ENCODE measurements at regions of chr7 and their contacts with region 1.

Region 1: DNA sequence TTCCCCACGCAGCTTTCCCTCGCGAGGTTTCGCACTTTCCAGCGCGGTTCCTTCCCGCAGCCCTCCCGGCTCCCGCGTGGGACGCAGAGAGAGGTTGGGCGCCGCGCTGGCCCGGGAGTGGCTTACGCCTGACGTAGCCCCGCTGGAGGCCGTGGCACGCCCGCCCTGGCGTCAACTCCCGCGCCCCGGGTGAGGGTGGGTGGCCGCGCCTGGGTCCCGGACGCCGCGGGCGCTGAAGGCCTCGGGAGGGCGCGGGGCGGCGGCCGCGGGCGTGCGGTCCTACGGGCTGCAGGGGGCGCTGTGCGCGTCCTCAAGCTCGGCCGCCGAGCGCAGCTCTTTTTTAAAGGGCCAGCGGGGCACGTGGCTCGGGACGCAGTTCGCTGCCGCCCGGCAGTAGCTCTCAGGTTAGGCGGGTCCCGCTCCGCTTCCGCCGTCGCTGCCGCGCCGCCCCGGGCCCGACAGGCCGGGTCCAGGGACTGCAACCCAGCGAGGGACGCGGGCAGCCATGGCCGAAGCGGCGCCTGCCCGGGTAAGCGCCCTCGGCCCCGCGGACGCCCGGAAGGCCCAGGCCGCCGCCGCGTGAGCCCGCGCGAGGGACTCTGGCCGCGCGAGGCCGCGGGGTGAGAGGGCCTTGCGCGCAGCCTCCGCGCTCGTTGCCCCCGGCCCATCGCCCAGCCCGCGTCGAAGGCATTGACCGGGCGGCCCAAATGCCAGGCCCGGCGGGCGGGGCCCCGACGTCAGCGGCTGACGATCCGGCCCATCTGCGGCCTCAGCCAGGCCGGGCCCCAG is at the start of gene ZNF783:
- DNase-seq: peak; percentile 93 to 96 (median 95)
- H3K4me3 ChIP-seq: peak within 1 kb of the TSS; percentile 31 to 80 (median 57)
- H3K27ac ChIP-seq: peak within 1 kb of the TSS in 1 of 2 experiments; percentile 64
- H3K4me1 ChIP-seq: peaks cover 0 to 16% (median 13%) of the 10 kb centered on the region in 4 experiments
- H3K27me3 ChIP-seq: no peaks in the 10 kb centered on the region

Region 2: GRCh38 chr7:149239345-149240191 is 22.5 kb before region 1 on chr7 and contains the start of gene ZNF212:
- CTCF ChIA-PET with region 1: interaction called, 10 read pairs
- POLR2A ChIA-PET with region 1: interaction called, 3 read pairs
- DNase-seq: peak; percentile 90 to 93 (median 92)
- H3K4me3 ChIP-seq: peak within 1 kb of the TSS; percentile 91 to 98 (median 97)
- H3K27ac ChIP-seq: peak within 1 kb of the TSS; percentile 74 to 91
- H3K4me1 ChIP-seq: peaks cover 6 to 11% (median 11%) of the 10 kb centered on the region in 4 experiments
- H3K27me3 ChIP-seq: peaks cover 0 to 4% (median 1%) of the 10 kb centered on the region in 5 experiments

Region 3: DNA sequence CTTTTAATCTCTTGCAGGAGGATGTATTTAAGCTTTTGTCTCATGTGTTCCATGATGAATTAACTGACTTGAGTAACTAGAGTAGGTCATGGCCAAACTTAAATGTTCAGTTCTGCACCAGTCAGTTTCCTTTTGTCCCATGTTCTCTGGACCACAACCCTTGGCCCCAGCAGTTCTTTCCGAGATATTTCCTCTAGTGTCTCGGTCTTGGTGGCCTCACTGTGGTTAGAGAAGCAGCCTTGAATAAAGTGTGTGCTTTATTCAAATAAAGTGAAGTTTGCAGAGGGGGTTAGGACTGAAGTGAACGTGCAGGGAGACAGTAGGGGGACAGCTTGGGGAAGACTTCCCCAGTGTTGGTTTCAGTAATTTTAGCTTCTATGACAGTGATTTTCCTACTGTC is 13.2 kb before region 1 on chr7:
- CTCF ChIA-PET with region 1: interaction called, 12 read pairs
- POLR2A ChIA-PET with region 1: no interaction called
- DNase-seq: no peak
- H3K4me3 ChIP-seq: no peak overlapping the region
- H3K27ac ChIP-seq: no peak overlapping the region
- H3K4me1 ChIP-seq: peaks cover 0 to 5% (median 4%) of the 10 kb centered on the region in 4 experiments
- H3K27me3 ChIP-seq: no peaks in the 10 kb centered on the region

Region 4: GRCh38 chr7:149284850-149285626 is 23.0 kb after region 1 on chr7:
- CTCF ChIA-PET with region 1: interaction called, 13 read pairs
- POLR2A ChIA-PET with region 1: no interaction called
- DNase-seq: peak; percentile 88 to 95 (median 94)
- H3K4me3 ChIP-seq: peak overlapping the region; percentile 23 to 80 (median 65)
- H3K27ac ChIP-seq: no peak overlapping the region
- H3K4me1 ChIP-seq: peaks cover 0 to 19% (median 13%) of the 10 kb centered on the region in 4 experiments
- H3K27me3 ChIP-seq: no peaks in the 10 kb centered on the region

Region 5: DNA sequence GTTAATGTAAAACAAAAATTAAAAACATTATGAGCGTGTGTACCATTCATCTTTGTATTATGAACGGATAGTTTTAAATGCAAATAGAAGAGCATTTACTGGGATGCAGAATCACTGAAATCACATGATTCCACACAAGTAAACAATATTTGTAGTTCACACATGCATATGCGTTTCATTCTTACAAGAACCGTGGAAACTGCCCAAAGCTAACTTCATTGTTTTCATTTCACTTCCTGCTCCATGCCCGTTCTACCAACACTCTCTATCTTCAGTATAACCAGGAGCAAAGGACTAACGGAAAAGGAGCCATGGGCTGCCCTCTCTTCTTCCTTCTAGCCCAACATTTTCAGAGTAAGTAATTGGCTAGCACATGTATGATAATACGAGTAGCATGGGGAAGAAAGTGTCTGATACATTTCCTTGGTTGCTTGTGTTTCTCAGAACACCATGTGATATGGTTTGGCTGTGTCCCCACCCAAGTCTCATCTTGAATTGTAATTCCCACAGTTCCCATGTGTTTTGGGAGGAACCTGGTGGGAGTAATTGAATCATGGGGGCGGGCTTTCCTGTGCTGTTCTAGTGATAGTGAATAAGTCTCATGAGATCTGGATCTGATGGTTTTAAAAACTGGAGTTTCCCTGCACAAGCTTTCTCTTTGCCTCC is 38.7 kb after region 1 on chr7:
- CTCF ChIA-PET with region 1: no interaction called
- POLR2A ChIA-PET with region 1: no interaction called
- DNase-seq: no peak
- H3K4me3 ChIP-seq: no peak overlapping the region
- H3K27ac ChIP-seq: no peak overlapping the region
- H3K4me1 ChIP-seq: no peaks in the 10 kb centered on the region
- H3K27me3 ChIP-seq: no peaks in the 10 kb centered on the region